ENCODE measurements at regions of chr15 and their contacts with region 1.

Region 1: GRCh38 chr15:74695597-74696397 is at the start of gene EDC3:
- DNase-seq: peak; percentile 90
- H3K4me3 Mint-ChIP-seq: peak within 1 kb of the TSS; percentile 100
- H3K27ac Mint-ChIP-seq: peak within 1 kb of the TSS; percentile 93
- H3K4me1 Mint-ChIP-seq: peaks cover 38% of the 10 kb centered on the region
- H3K27me3 Mint-ChIP-seq: no peaks in the 10 kb centered on the region
- total RNA-seq, gene EDC3: 36.8 to 39.9 TPM

Region 2: GRCh38 chr15:74651242-74651741 is 44.5 kb before region 1 on chr15:
- CTCF ChIA-PET with region 1: no interaction called
- POLR2A ChIA-PET with region 1: no interaction called
- intact Hi-C with region 1: no loop called
- DNase-seq: no peak
- H3K4me3 Mint-ChIP-seq: no peak overlapping the region
- H3K27ac Mint-ChIP-seq: no peak overlapping the region
- H3K4me1 Mint-ChIP-seq: peaks cover 11% of the 10 kb centered on the region
- H3K27me3 Mint-ChIP-seq: no peaks in the 10 kb centered on the region

Region 3: DNA sequence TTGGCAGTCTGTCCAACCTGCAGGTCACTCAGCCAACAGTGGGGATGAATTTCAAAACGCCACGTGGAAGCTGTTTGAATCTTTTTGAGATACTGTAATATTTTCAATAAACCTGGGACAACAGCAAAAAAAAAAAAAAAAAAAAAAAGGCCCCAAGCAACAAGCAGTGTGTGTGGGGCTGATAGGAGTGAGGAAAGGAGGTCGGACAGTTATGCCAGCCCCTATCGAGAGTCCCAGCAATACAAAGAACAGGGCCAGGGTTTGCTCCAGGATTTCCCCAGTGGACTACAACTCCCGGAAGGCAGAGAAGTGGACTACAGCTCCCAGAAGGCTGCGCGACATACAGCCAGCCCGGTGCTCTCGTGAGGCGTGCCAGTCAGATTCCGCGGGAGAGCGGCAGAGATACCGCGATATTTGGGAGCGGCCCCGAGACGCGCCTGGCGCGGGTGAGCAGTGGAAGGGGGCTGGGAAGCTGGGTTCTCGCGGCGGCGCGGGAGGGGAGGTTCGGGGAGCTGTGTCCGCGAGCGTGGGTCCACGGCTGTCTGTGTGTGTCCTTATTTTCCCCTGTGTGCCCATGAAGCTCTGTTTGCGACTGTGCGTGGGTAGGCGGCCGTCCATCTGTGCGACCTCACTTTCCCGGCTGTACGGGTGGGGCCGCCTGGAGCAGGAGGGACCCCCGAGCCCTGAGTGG is 327.5 kb after region 1 on chr15 and contains the start of gene PPCDC:
- CTCF ChIA-PET with region 1: no interaction called
- POLR2A ChIA-PET with region 1: no interaction called
- intact Hi-C with region 1: loop called (anchors 2 kb)
- DNase-seq: peak; percentile 97
- H3K4me3 Mint-ChIP-seq: peak within 1 kb of the TSS; percentile 89
- H3K27ac Mint-ChIP-seq: peak within 1 kb of the TSS; percentile 89
- H3K4me1 Mint-ChIP-seq: peaks cover 11% of the 10 kb centered on the region
- H3K27me3 Mint-ChIP-seq: no peaks in the 10 kb centered on the region
- total RNA-seq, gene PPCDC: 16.3 to 18.8 TPM

Region 4: GRCh38 chr15:75153087-75153486 is 457.3 kb after region 1 on chr15:
- CTCF ChIA-PET with region 1: no interaction called
- POLR2A ChIA-PET with region 1: no interaction called
- intact Hi-C with region 1: no loop called
- DNase-seq: no peak
- H3K4me3 Mint-ChIP-seq: no peak overlapping the region
- H3K27ac Mint-ChIP-seq: no peak overlapping the region
- H3K4me1 Mint-ChIP-seq: peaks cover 6% of the 10 kb centered on the region
- H3K27me3 Mint-ChIP-seq: peaks cover 7% of the 10 kb centered on the region

Region 5: DNA sequence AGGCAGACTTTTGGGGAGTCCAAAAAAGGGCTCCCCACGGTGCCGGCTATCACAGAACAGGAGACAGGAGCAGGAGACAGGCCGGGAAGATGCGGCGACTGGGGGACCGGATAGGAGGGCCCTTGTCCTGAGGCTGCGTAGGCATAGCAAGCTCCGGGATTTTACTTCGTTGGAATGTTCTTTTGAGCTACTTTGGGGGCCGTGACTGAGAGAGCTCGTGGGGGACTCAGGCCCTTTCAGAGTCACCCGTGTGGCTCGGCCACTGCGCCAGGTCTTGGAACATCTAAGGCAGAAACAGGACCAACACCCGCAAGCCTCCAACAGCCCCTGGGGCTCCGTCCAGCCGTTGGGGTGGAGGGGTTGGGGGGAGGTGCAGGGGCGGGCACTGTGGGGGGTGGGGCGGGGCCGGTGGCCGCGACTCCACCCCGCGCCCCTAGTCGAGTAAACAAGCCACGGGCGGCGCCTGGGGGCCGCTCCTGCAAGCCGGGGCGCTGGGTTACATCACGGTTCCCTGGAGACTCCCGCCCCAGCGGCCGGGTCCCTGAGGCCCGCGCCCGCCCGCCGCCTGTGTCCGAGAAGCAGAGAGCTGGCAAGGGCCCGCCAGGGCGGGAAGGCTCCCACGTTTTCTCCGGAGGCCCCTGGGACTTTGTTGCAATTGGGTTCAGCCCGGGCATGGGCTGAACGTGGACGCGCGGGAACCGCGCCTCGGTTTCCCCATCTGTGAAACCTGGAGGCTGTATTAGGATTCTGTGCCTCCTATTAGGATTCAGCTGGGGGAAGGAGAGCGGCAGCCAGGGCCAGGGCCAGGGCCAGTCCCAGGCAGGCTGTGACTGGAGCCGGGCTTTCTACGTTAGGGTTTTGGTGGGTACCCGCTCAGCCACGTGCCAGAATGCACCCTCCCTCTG is 482.6 kb after region 1 on chr15:
- CTCF ChIA-PET with region 1: no interaction called
- POLR2A ChIA-PET with region 1: no interaction called
- intact Hi-C with region 1: no loop called
- DNase-seq: no peak
- H3K4me3 Mint-ChIP-seq: no peak overlapping the region
- H3K27ac Mint-ChIP-seq: no peak overlapping the region
- H3K4me1 Mint-ChIP-seq: no peaks in the 10 kb centered on the region
- H3K27me3 Mint-ChIP-seq: peaks cover 31% of the 10 kb centered on the region

Region 6: DNA sequence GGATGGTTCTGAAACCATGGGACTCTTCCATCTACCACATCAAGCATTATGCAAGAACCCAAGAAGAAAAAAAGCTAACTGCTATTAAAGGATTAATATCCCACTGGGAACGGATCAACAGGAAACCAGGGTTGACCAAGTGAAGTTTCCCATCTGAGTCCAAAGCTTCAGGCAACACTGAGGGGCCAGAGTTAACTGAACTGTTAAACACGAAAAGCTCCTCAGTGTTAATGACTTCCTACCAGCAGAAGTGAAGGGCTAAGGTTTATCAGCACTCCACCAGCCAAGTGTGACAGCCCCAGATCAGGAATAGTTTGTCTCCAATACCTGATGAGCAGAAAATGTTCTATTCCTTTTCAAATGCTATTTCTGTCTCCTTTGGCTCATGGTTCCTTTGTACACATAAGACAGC is 846.6 kb after region 1 on chr15:
- CTCF ChIA-PET with region 1: no interaction called
- POLR2A ChIA-PET with region 1: no interaction called
- intact Hi-C with region 1: no loop called
- DNase-seq: no peak
- H3K4me3 Mint-ChIP-seq: no peak overlapping the region
- H3K27ac Mint-ChIP-seq: no peak overlapping the region
- H3K4me1 Mint-ChIP-seq: peaks cover 14% of the 10 kb centered on the region
- H3K27me3 Mint-ChIP-seq: no peaks in the 10 kb centered on the region

Measured in activated CD4-positive, alpha-beta memory T cell treated with anti-CD3 and anti-CD28 coated beads for 36 hours (primary cell).